BJ (cell line): ENCODE measurements at regions of chr5 and their contacts with region 1.

Region 1: GRCh38 chr5:81851481-81852178 is 100.7 kb upstream of the SSBP2 start:
- DNase-seq: peak; percentile 72
- H3K4me3 ChIP-seq: peak overlapping the region; percentile 35
- H3K27me3 ChIP-seq: no peaks in the 10 kb centered on the region
- CTCF ChIP-seq: no peak

Region 2: GRCh38 chr5:80417973-80418372 is 1433.7 kb before region 1 on chr5:
- CTCF ChIA-PET with region 1: no interaction called
- POLR2A ChIA-PET with region 1: interaction called, 18 read pairs
- DNase-seq: no peak
- H3K4me3 ChIP-seq: no peak overlapping the region
- H3K27me3 ChIP-seq: no peaks in the 10 kb centered on the region
- CTCF ChIP-seq: no peak

Region 3: DNA sequence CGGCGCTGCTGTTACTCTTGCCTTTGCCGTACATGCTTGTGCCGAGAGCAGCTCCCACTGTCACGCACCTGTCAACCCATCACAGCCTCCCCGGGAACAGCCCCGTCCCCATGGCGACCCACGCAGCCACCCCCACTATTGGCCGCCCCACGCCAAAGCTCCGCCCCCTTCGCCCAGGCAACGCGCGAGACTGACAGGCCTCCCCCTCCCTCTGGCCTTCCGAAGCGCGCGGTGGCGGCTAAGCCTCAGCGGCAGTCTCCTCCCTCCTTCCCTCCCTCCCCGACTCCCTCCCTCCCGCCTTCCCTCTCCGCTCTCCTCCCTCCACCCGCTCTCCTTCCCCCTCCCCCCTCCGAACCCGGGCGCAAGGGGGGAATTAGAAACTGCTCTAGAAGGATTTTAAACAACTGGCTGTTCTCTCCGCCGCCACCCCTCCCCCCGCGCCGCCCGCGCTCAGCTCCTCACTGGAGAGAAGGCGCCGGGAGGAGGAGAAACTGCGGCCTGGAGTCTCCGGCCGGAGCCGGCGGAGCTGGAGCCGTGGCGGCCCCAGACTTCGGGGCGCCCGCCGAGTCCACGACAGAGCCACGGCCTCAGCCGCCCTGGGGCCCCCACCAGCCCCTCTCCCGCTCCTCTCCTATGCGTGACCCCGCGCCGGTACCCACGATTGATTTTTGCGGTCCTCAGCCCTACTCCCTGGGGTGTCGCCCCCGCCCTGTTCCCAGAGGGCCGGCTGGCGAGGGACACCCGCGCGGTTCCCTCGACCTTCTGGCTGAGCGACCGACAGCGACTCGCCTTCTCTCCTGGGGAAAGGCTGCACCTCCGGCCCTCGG is 100.4 kb before region 1 on chr5 and contains the start of gene SSBP2:
- CTCF ChIA-PET with region 1: interaction called, 20 read pairs
- POLR2A ChIA-PET with region 1: interaction called, 26 read pairs
- DNase-seq: peak; percentile 89
- H3K4me3 ChIP-seq: peak within 1 kb of the TSS; percentile 71
- H3K27me3 ChIP-seq: no peaks in the 10 kb centered on the region
- CTCF ChIP-seq: no peak
- polyA plus RNA-seq, gene SSBP2: 68.8 and 69.2 TPM in 2 replicates

Region 4: GRCh38 chr5:81838307-81838906 is 13.2 kb before region 1 on chr5:
- CTCF ChIA-PET with region 1: interaction called, 21 read pairs
- POLR2A ChIA-PET with region 1: no interaction called
- DNase-seq: no peak
- H3K4me3 ChIP-seq: no peak overlapping the region
- H3K27me3 ChIP-seq: no peaks in the 10 kb centered on the region
- CTCF ChIP-seq: peak; percentile 70

Region 5: GRCh38 chr5:82165740-82166530 is 314.3 kb after region 1 on chr5:
- CTCF ChIA-PET with region 1: interaction called, 15 read pairs
- POLR2A ChIA-PET with region 1: no interaction called
- DNase-seq: no peak
- H3K4me3 ChIP-seq: no peak overlapping the region
- H3K27me3 ChIP-seq: no peaks in the 10 kb centered on the region
- CTCF ChIP-seq: peak; percentile 69